ENCODE measurements at regions of chr5 and their contacts with region 1.

Region 1: DNA sequence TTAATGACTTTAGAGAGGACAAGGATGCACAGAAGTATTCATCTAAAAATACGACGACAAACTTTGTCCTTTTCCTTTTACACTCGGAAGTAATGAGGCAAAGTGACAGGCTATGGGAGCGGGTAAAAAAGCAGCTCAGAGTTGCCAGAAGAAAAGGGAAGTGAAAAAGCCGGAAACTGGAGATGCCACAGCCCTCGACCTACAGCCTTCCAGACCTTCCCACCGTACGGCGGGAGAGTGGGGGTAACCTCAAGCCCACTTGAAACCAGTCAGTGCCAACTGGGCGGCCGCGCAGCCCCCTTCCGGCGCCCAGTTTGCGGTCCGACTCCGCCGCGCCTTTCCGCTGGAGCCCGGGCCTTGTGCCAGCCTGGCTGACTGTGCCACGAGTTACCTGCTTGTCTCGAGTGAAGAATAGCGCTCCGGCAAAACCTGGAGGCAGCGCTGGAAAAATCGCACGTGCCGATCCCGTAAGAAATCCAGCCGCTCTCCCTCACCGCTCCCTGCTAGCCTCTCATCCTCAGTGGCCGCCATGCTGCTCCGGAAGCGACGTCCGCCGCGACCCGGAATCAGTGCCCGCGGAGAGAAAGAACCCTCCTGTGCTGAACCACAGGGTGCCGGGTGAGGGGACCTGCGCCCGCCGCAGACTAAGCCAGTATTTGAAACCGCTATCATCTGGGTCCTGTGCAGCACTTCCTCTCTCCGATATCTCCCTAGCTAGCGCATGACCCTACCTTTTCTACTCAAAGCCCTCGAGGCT is at the start of gene PGGT1B:
- DNase-seq: peak; percentile 82
- H3K4me3 Mint-ChIP-seq: peak within 1 kb of the TSS; percentile 92
- H3K27ac Mint-ChIP-seq: peak within 1 kb of the TSS; percentile 93
- H3K4me1 Mint-ChIP-seq: peaks cover 43% of the 10 kb centered on the region
- H3K27me3 Mint-ChIP-seq: no peaks in the 10 kb centered on the region
- total RNA-seq, gene PGGT1B: 35.8 to 37.4 TPM

Region 2: GRCh38 chr5:114411380-114411931 is 851.0 kb before region 1 on chr5:
- CTCF ChIA-PET with region 1: no interaction called
- intact Hi-C with region 1: no loop called
- DNase-seq: no peak
- H3K4me3 Mint-ChIP-seq: no peak overlapping the region
- H3K27ac Mint-ChIP-seq: no peak overlapping the region
- H3K4me1 Mint-ChIP-seq: no peaks in the 10 kb centered on the region
- H3K27me3 Mint-ChIP-seq: no peaks in the 10 kb centered on the region

Region 3: DNA sequence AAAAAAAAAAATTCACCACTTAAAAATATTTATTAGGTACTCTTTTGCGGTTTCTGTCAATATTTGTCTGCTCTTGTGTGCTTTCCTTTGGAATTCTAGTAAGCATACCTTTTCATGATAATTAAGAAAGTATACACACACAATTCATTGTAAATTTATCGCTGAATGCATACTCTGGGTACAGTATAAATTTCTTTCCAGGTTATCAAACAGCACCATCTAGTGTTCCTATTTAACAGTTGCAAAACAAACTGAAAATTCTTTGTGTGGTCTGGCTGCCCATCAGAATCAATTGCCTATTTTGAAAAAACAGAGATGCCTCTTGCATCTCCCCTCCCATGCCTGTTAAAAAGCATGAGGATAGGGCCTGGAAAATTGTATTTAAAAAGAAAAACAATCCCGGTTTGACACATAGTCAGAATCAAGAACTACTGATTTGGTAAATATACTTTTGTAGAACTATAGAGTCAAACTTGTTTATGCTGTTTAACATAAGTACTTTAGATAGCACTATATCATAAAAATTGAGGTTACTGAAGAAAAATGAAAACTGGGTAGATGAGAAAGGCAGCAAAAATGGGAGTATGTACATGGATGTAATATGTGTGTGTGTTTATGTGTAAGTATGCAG is 16.0 kb before region 1 on chr5:
- CTCF ChIA-PET with region 1: interaction called, 3 read pairs
- intact Hi-C with region 1: loop called (anchors 1 kb)
- DNase-seq: no peak
- H3K4me3 Mint-ChIP-seq: no peak overlapping the region
- H3K27ac Mint-ChIP-seq: no peak overlapping the region
- H3K4me1 Mint-ChIP-seq: peaks cover 25% of the 10 kb centered on the region
- H3K27me3 Mint-ChIP-seq: no peaks in the 10 kb centered on the region

Region 4: DNA sequence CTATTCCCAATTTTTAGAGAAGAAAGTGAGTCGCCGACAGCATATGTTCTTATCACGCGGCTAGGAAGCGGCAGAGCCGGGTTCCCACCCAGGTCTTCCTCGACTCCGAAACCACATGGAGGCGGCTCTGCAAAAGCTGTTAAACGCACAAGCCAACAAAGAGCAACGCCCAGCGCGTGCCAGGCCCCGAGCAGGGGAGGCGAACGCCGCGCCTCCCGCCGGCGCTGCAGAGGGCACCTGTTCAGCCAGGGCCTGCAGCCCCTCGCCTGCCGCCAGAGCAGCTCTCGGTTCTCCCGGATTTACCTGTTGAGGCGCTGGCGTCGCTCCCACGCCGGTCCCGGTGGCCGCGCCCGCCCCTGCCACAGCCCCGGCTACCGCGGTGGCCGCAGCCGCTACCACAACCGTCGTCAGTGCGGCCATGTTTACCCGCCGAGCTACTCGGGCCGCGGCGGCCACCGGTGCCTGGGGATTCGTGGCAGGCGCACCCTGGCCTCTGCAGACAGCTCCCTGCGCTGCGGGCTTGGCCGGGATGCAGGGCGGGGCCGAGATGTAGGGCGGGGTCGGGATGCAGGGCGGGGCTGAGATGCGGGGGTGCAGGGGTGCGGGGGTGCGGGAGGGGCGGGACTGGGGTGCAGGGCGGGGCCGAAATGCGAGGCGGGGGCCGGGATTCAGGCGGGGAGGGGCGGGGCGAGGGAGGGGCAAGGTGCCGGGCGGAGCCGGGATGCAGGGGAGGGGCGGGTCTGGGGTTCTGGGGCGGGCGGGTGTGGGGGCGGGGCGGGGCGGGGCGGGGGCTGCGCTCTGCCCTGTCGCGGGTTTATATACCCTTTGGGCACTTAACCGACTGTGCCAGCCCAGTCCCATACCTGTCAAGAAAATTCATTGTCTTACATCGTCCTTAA is 33.9 kb after region 1 on chr5 and contains the start of gene CCDC112:
- CTCF ChIA-PET with region 1: no interaction called
- intact Hi-C with region 1: loop called (anchors 1 kb)
- DNase-seq: peak; percentile 85
- H3K4me3 Mint-ChIP-seq: peak within 1 kb of the TSS; percentile 80
- H3K27ac Mint-ChIP-seq: no peak within 1 kb of the TSS
- H3K4me1 Mint-ChIP-seq: peaks cover 4% of the 10 kb centered on the region
- H3K27me3 Mint-ChIP-seq: peaks cover 3% of the 10 kb centered on the region
- total RNA-seq, gene CCDC112: 1.9 to 2.1 TPM

Region 5: DNA sequence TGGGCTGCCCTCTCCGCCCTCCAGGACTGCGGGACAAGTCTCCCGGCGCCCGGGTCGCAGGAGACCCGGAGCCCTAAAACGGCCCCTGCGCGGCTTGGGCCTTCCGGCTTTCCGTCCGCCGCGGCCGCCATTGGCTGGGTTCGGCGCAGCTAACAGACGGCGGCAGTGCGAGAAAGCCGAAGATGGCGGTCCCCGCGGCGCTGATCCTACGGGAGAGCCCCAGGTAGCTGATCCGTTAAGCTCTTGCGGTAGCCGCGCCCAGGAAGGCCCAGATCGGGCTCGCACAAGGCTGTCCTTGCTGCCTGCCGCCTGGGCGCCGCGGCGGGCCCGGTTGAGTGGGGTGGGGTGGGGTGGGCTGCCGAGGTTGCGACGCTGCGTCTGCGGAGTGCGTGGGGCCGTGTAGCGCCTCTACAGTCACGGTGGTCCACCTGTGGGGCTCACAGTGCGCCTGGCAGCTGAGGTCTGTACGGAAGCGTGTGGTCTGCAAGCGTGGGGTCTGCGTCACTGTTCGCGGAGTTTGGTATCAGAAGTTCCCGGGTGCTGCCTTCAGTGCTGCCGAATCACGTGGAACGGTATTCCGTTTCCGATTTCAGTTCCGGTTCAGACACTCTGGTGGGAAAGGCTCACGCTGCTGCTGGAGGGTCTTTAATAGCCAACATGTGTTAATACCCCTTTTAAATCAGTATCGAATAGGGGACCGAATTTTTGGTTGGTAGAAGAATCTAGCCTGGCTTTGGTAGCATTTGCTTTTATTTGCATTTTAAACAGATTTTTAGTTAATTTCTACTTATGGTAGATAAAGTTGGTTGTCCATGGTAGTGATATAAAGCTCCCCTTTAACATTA is 822.6 kb after region 1 on chr5 and contains the start of gene COMMD10:
- CTCF ChIA-PET with region 1: no interaction called
- intact Hi-C with region 1: loop called (anchors 5 kb)
- DNase-seq: peak; percentile 81
- H3K4me3 Mint-ChIP-seq: peak within 1 kb of the TSS; percentile 91
- H3K27ac Mint-ChIP-seq: peak within 1 kb of the TSS; percentile 97
- H3K4me1 Mint-ChIP-seq: peaks cover 45% of the 10 kb centered on the region
- H3K27me3 Mint-ChIP-seq: no peaks in the 10 kb centered on the region
- total RNA-seq, gene COMMD10: 30.0 to 30.9 TPM

Region 6: GRCh38 chr5:116442095-116442534 is 1179.6 kb after region 1 on chr5:
- CTCF ChIA-PET with region 1: no interaction called
- intact Hi-C with region 1: no loop called
- DNase-seq: no peak
- H3K4me3 Mint-ChIP-seq: no peak overlapping the region
- H3K27ac Mint-ChIP-seq: no peak overlapping the region
- H3K4me1 Mint-ChIP-seq: no peaks in the 10 kb centered on the region
- H3K27me3 Mint-ChIP-seq: no peaks in the 10 kb centered on the region

Measured in activated naive CD4-positive, alpha-beta T cell treated with anti-CD3 and anti-CD28 coated beads for 36 hours (primary cell).